PC-9 (cell line): ENCODE measurements at regions of chr1 and their contacts with region 1.

Region 1: GRCh38 chr1:212256369-212256768 is 28.8 kb upstream of the PPP2R5A start:
- DNase-seq: no peak
- H3K4me3 ChIP-seq: no peak overlapping the region
- H3K27ac ChIP-seq: no peak overlapping the region
- H3K4me1 ChIP-seq: peaks cover 13% of the 10 kb centered on the region
- H3K27me3 ChIP-seq: no peaks in the 10 kb centered on the region
- CTCF ChIP-seq: no peak

Region 2: DNA sequence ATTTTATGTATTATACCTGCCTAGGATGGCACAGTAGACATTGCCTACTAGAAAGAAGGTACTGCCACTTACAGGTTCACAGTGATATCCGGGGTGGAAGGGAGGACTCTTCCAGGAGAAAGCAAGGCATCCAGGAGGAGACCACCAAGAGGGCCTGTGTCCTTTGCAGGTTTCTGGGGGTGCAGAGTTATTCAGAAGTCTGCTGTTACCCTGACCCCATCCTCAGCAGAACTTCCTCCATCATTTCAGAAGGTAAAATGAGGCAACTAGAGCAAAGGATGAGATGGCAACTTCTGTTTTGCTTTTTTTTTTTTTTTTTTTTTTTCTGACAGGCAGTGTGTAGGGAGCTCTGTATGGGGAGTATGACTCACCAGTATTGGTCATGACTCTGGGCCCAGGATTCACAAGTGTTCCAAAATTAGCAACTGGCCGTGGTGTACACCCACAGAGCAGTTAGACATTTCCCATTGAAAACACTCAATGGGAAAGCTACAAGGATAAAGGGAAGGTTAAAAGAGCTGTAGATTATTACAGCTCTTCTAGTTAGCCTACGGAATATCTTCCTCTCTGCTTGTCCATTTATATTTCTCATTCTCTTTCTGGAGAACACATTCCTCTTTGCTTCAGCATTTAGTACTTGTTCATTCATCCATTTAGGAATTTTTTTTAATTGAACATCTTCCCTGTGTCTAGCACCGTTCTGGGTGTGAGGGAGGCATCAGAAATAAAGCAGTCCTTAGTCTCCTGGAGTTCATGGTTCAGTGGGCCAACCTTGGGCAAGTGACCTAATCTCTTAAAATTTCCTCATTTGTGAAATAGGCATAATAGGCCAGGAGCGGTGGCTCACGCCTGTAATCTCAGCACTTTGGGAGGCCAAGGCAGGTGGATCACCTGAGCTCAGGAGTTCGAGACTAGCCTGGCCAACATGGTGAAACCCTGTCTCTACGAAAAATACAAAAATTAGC is 21.7 kb before region 1 on chr1:
- CTCF ChIA-PET with region 1: no interaction called
- POLR2A ChIA-PET with region 1: no interaction called
- intact Hi-C with region 1: loop called (anchors 2 kb)
- DNase-seq: peak; percentile 53 to 80
- H3K4me3 ChIP-seq: no peak overlapping the region
- H3K27ac ChIP-seq: peak overlapping the region; percentile 69
- H3K4me1 ChIP-seq: peaks cover 32% of the 10 kb centered on the region
- H3K27me3 ChIP-seq: no peaks in the 10 kb centered on the region
- CTCF ChIP-seq: no peak